Endothelial cell of umbilical vein (primary cell): ENCODE measurements at regions of chr11 and their contacts with region 1.

Region 1: DNA sequence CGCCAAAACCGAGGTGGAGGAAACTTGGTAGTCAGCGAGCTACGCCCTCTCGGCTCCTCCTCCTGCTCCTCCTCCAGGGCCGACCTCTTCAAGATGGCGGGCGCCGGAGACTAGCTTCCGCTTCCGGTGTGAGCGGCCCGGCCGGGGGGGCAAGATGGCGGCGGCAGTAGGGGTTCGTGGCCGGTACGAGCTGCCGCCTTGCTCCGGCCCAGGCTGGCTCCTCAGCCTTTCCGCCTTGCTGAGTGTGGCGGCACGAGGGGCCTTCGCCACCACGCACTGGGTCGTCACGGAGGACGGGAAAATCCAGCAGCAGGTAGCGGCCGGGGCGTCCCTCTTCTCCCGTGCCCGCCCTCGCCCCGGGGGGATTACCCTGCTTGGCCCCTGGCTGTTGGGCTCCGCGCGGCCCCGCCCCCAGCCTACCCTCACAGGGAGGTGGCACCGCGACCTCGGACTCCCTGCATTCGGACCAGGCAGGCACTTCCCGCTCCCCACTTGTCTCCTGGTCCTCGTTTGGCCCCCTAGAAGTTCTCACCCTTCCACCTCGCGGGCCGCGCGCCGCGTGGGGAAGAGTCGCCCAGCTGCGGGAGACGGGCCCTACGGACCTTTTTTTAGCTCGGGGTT is at the start of gene TTC17:
- DNase-seq: peak; percentile 90
- H3K4me3 ChIP-seq: peak within 1 kb of the TSS; percentile 57 to 74 (median 62)
- H3K27ac ChIP-seq: peak within 1 kb of the TSS; percentile 66
- H3K4me1 ChIP-seq: peaks cover 17% of the 10 kb centered on the region
- H3K27me3 ChIP-seq: no peaks in the 10 kb centered on the region
- CTCF ChIP-seq: no peak
- POLR2A ChIP-seq: peak; percentile 97
- total RNA-seq, gene TTC17: 55.7 and 66.8 TPM in 2 replicates

Region 2: DNA sequence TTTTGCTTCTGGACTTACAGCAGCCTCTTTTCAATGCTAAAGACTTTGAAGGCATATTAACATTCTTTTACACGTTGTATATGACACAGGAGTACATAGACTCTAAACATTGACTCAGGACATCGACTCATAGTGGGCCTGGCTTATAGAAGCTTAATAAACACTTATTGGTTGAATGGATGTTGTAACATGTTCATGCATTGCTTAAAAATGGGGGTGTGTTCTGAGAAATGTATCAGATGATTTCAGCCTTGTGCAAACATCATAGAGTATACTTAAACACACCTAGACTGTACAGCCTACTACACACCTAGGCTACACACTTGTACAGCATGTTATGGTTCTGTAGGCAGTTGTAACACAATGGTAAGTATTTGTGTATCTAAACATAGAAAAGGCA is 17.7 kb after region 1 on chr11:
- CTCF ChIA-PET with region 1: interaction called, 12 read pairs
- POLR2A ChIA-PET with region 1: interaction called, 3 read pairs
- dilution Hi-C with region 1: no loop called
- intact Hi-C with region 1: no loop called
- DNase-seq: peak; percentile 48
- H3K4me3 ChIP-seq: no peak overlapping the region
- H3K27ac ChIP-seq: no peak overlapping the region
- H3K4me1 ChIP-seq: peaks cover 8% of the 10 kb centered on the region
- H3K27me3 ChIP-seq: no peaks in the 10 kb centered on the region
- CTCF ChIP-seq: no peak
- POLR2A ChIP-seq: no peak

Region 3: DNA sequence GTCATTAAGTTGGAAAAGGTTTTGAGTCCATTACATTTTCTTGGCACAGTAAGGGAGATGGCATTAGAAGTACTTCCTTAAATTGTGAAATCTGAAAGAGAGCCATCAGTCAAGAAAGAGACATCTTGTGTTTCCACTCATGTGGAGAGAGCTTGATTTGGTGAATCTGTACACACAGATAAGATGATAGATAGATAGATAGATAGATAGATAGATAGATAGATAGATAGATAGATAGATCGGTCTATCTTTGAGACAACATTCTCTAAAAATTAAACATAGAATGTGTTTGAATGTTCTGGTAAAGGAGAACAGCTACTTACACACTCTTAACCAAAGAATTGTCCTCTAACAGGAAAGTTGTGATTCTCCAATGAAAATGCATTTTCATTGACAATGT is 76.0 kb after region 1 on chr11:
- CTCF ChIA-PET with region 1: no interaction called
- POLR2A ChIA-PET with region 1: no interaction called
- dilution Hi-C with region 1: no loop called
- intact Hi-C with region 1: no loop called
- DNase-seq: no peak
- H3K4me3 ChIP-seq: no peak overlapping the region
- H3K27ac ChIP-seq: no peak overlapping the region
- H3K4me1 ChIP-seq: no peaks in the 10 kb centered on the region
- H3K27me3 ChIP-seq: no peaks in the 10 kb centered on the region
- CTCF ChIP-seq: no peak
- POLR2A ChIP-seq: no peak